ENCODE measurements at regions of chr17 and their contacts with region 1.

Region 1: GRCh38 chr17:43840814-43841213 is 6.2 kb upstream of the CD300LG start:
- DNase-seq: no peak
- H3K4me3 ChIP-seq: no peak overlapping the region
- CTCF ChIP-seq: peak; percentile 35

Region 2: GRCh38 chr17:43760254-43760852 is 80.5 kb before region 1 on chr17:
- in situ Hi-C with region 1: no loop called
- DNase-seq: peak; percentile 91
- H3K4me3 ChIP-seq: no peak overlapping the region
- CTCF ChIP-seq: peak; percentile 98

Region 3: GRCh38 chr17:43803758-43804157 is 37.1 kb before region 1 on chr17:
- in situ Hi-C with region 1: no loop called
- DNase-seq: no peak
- H3K4me3 ChIP-seq: no peak overlapping the region
- CTCF ChIP-seq: no peak

Region 4: GRCh38 chr17:43911904-43912303 is 71.1 kb after region 1 on chr17:
- in situ Hi-C with region 1: loop called (anchors 5 kb)
- DNase-seq: no peak
- H3K4me3 ChIP-seq: no peak overlapping the region
- CTCF ChIP-seq: no peak

Measured in astrocyte of the cerebellum (primary cell).